ENCODE measurements at regions of chr6 and their contacts with region 1.

Region 1: GRCh38 chr6:107114213-107114905 is 956 bp downstream of the BEND3 start:
- DNase-seq: peak; percentile 58 to 77 (median 68)
- H3K4me3 ChIP-seq: peak overlapping the region in 1 of 2 donors; percentile 23
- H3K4me3 Mint-ChIP-seq: peak overlapping the region; percentile 76 to 89 (median 82)
- H3K27ac ChIP-seq: no peak overlapping the region
- H3K27ac Mint-ChIP-seq: peak overlapping the region in 4 of 7 donors; percentile 61 to 81 (median 70)
- H3K4me1 ChIP-seq: peaks cover 19% of the 10 kb centered on the region
- H3K4me1 Mint-ChIP-seq: peaks cover 8 to 18% (median 13%) of the 10 kb centered on the region in 4 donors
- H3K27me3 ChIP-seq: peaks cover 5% of the 10 kb centered on the region
- H3K27me3 Mint-ChIP-seq: peaks cover 3 to 5% of the 10 kb centered on the region in 2 donors

Region 2: DNA sequence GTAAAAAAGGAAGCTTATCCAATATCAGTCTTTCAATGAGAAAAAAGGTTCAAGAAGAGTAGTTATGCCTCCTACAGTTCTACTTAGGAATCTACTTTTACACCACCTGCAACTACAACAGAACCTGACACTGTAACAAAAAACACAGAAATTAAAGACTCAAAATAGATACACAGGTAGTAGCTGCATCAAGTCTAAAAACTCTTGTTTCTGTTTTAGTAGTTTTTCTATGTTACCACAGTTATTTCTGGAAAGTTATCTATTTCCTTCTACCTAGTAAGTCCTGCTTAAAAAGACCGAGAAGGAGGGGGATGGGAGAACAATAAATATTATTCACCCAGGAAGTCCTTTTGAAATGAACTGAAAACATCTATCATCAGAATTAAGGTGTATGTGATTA is 841.3 kb before region 1 on chr6:
- CTCF ChIA-PET with region 1: no interaction called
- POLR2A ChIA-PET with region 1: no interaction called
- intact Hi-C with region 1: no loop called
- DNase-seq: no peak
- H3K4me3 ChIP-seq: no peak overlapping the region
- H3K4me3 Mint-ChIP-seq: peak overlapping the region in 3 of 8 donors; percentile 30 to 45 (median 33)
- H3K27ac ChIP-seq: no peak overlapping the region
- H3K27ac Mint-ChIP-seq: peak overlapping the region in 4 of 7 donors; percentile 2 to 32 (median 17)
- H3K4me1 ChIP-seq: peaks cover 15% of the 10 kb centered on the region
- H3K4me1 Mint-ChIP-seq: peaks cover 15 to 23% (median 19%) of the 10 kb centered on the region in 4 donors
- H3K27me3 ChIP-seq: no peaks in the 10 kb centered on the region
- H3K27me3 Mint-ChIP-seq: no peaks in the 10 kb centered on the region

Region 3: GRCh38 chr6:106757267-106757666 is 357.1 kb before region 1 on chr6:
- CTCF ChIA-PET with region 1: no interaction called
- POLR2A ChIA-PET with region 1: no interaction called
- intact Hi-C with region 1: no loop called
- DNase-seq: no peak
- H3K4me3 ChIP-seq: no peak overlapping the region
- H3K4me3 Mint-ChIP-seq: no peak overlapping the region
- H3K27ac ChIP-seq: no peak overlapping the region
- H3K27ac Mint-ChIP-seq: no peak overlapping the region
- H3K4me1 ChIP-seq: no peaks in the 10 kb centered on the region
- H3K4me1 Mint-ChIP-seq: no peaks in the 10 kb centered on the region
- H3K27me3 ChIP-seq: no peaks in the 10 kb centered on the region
- H3K27me3 Mint-ChIP-seq: peaks cover 12 to 13% of the 10 kb centered on the region in 2 donors

Region 4: GRCh38 chr6:106959985-106960384 is 154.4 kb before region 1 on chr6:
- CTCF ChIA-PET with region 1: no interaction called
- POLR2A ChIA-PET with region 1: no interaction called
- intact Hi-C with region 1: no loop called
- DNase-seq: no peak
- H3K4me3 ChIP-seq: no peak overlapping the region
- H3K4me3 Mint-ChIP-seq: no peak overlapping the region
- H3K27ac ChIP-seq: no peak overlapping the region
- H3K27ac Mint-ChIP-seq: no peak overlapping the region
- H3K4me1 ChIP-seq: no peaks in the 10 kb centered on the region
- H3K4me1 Mint-ChIP-seq: no peaks in the 10 kb centered on the region
- H3K27me3 ChIP-seq: no peaks in the 10 kb centered on the region
- H3K27me3 Mint-ChIP-seq: peaks cover 7 to 19% of the 10 kb centered on the region in 2 donors

Region 5: DNA sequence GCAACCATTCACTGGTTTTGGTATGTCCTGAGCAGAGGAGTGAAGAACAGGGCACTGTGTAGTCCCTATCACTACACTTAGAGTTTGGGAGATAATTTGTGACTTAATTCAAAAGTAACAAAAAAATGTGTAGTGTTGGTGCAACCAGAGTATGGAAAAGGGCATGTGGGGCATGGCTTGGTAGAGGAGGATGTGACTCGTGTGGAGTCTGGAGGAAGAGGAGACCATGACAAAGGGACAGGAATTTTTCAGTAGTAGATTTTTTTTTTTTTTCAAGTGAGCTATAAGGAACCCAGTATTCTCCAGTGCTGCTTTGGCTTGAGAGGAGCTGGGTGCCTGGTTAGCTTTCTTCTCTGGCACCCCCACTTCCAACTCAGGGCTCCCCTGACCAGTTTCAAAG is 81.2 kb before region 1 on chr6:
- CTCF ChIA-PET with region 1: interaction called, 28 read pairs
- POLR2A ChIA-PET with region 1: interaction called, 6 read pairs
- intact Hi-C with region 1: loop called (anchors 1 kb)
- DNase-seq: no peak
- H3K4me3 ChIP-seq: no peak overlapping the region
- H3K4me3 Mint-ChIP-seq: no peak overlapping the region
- H3K27ac ChIP-seq: no peak overlapping the region
- H3K27ac Mint-ChIP-seq: peak overlapping the region in 1 of 7 donors; percentile 19
- H3K4me1 ChIP-seq: peaks cover 15% of the 10 kb centered on the region
- H3K4me1 Mint-ChIP-seq: peaks cover 25 to 52% (median 32%) of the 10 kb centered on the region in 4 donors
- H3K27me3 ChIP-seq: no peaks in the 10 kb centered on the region
- H3K27me3 Mint-ChIP-seq: no peaks in the 10 kb centered on the region

Region 6: DNA sequence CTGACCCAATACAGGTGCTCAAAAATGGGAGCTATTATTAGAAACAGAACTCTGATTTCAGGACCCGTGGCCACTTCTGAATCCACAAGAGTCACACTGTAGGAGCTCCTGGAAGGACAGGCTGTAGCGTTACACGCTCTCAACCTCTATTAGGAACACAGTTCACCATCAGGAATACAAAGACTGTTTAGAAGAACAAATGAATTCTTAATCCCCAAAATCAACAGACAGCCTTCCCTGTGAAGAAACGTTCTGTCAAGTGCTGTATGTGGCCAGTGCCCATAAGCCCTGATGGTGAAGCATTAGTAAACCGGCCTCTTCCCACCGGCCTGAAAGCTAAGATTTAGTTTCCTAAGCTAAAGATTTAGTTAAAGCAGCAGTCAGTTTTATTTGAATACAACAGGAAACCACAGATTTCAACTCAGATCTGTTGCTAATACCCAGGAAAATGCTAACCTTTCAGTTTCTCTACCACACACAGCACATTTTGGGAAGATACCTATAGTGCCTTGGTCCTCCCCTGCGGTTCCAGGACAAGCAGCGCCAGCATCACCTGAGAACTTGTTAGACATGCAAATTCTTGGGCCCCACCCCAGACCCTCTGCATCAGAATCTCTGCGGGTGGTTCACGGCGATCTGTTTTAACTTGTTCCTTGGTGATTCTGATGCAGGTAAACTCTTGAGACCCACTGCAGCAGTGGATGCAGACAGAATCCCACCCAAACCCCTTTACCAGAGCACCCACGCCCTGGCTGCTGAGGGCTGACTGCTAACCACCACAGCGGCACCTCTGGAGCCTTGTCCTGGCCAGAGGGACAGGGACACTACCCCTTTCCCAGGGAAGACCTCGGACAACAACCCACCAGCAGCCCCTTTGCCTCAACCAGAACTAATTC is 53.0 kb before region 1 on chr6:
- CTCF ChIA-PET with region 1: interaction called, 17 read pairs
- POLR2A ChIA-PET with region 1: no interaction called
- intact Hi-C with region 1: no loop called
- DNase-seq: peak in 4 of 5 donors; percentile 1 to 21 (median 11)
- H3K4me3 ChIP-seq: peak overlapping the region; percentile 23 to 45
- H3K4me3 Mint-ChIP-seq: peak overlapping the region; percentile 72 to 89 (median 82)
- H3K27ac ChIP-seq: no peak overlapping the region
- H3K27ac Mint-ChIP-seq: peak overlapping the region in 6 of 7 donors; percentile 81 to 92 (median 86)
- H3K4me1 ChIP-seq: peaks cover 25% of the 10 kb centered on the region
- H3K4me1 Mint-ChIP-seq: peaks cover 19 to 44% (median 32%) of the 10 kb centered on the region in 4 donors
- H3K27me3 ChIP-seq: no peaks in the 10 kb centered on the region
- H3K27me3 Mint-ChIP-seq: peaks cover 0 to 2% of the 10 kb centered on the region in 2 donors

Region 7: DNA sequence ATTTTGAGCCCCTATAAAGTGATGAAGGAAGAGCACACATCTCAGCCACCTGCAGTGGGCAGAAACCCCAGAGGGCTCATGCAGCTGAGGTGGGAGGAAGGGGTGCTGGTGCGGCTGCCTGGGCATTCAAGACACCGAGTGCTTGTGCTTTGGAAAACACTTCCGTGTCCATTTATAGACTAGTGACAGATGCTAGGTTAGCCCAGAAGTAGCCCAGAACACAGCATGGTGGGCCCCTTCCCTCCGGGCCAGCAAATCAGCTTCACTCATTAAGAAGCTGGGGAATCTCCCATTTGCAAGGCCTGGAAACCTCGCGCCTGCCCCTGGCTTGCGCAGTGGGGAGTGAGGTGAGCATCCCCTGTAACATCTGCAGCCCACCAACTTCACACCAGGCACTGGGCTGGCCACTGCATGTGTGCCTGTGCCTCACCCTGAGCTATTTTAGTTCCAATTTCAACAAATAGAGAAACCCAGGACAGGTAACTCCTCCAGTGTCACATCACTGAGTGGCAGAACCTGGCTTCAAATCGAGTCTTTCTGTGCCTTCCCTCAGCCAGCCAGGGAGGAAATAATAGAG is 11.9 kb before region 1 on chr6:
- CTCF ChIA-PET with region 1: interaction called, 11 read pairs
- POLR2A ChIA-PET with region 1: no interaction called
- intact Hi-C with region 1: no loop called
- DNase-seq: no peak
- H3K4me3 ChIP-seq: no peak overlapping the region
- H3K4me3 Mint-ChIP-seq: no peak overlapping the region
- H3K27ac ChIP-seq: no peak overlapping the region
- H3K27ac Mint-ChIP-seq: no peak overlapping the region
- H3K4me1 ChIP-seq: no peaks in the 10 kb centered on the region
- H3K4me1 Mint-ChIP-seq: no peaks in the 10 kb centered on the region
- H3K27me3 ChIP-seq: no peaks in the 10 kb centered on the region
- H3K27me3 Mint-ChIP-seq: no peaks in the 10 kb centered on the region

Region 8: GRCh38 chr6:107275330-107275865 is 161.0 kb after region 1 on chr6:
- CTCF ChIA-PET with region 1: no interaction called
- POLR2A ChIA-PET with region 1: no interaction called
- intact Hi-C with region 1: no loop called
- DNase-seq: no peak
- H3K4me3 ChIP-seq: no peak overlapping the region
- H3K4me3 Mint-ChIP-seq: no peak overlapping the region
- H3K27ac ChIP-seq: no peak overlapping the region
- H3K27ac Mint-ChIP-seq: no peak overlapping the region
- H3K4me1 ChIP-seq: no peaks in the 10 kb centered on the region
- H3K4me1 Mint-ChIP-seq: peaks cover 0 to 3% (median 1%) of the 10 kb centered on the region in 4 donors
- H3K27me3 ChIP-seq: no peaks in the 10 kb centered on the region
- H3K27me3 Mint-ChIP-seq: no peaks in the 10 kb centered on the region

Measured in CD4-positive, alpha-beta memory T cell (primary cell).